ENCODE measurements at regions of chrX and their contacts with region 1.

Region 1: DNA sequence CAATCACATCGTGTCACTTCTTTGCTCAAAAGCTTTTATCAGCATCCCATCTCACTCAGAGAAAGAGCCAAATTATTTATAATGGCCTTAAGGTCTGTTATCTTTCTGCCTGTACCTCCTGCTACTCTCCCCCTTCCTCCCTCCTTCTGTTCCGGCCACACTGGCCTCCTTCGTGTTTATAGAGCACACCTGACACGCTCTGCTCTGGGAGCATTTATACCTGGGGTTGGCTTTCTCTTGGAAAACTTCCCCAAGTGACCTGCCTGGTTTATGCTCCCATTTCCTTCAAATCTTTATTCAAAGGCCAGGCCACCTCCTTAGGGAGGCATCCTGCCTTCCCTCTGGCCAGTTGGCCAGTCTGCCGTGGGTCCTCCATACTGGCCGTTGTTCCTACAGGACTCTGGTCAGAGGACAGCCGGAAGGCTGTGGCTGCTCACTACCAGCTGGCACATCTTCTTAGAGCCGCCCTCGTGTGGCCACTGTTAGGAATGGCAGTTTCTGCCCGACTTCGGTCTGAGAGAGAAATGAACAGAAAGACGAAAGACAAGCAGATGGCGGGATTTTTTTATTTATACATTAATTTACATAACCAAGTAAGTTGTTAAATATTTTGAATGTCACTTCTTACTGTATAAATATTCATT is 80.2 kb upstream of the CBLL2 start:
- DNase-seq: peak; percentile 73
- ATAC-seq: peak; percentile 36
- H3K4me3 Mint-ChIP-seq: no peak overlapping the region
- H3K27ac Mint-ChIP-seq: no peak overlapping the region
- H3K4me1 Mint-ChIP-seq: peaks cover 8% of the 10 kb centered on the region
- H3K27me3 Mint-ChIP-seq: no peaks in the 10 kb centered on the region

Region 2: DNA sequence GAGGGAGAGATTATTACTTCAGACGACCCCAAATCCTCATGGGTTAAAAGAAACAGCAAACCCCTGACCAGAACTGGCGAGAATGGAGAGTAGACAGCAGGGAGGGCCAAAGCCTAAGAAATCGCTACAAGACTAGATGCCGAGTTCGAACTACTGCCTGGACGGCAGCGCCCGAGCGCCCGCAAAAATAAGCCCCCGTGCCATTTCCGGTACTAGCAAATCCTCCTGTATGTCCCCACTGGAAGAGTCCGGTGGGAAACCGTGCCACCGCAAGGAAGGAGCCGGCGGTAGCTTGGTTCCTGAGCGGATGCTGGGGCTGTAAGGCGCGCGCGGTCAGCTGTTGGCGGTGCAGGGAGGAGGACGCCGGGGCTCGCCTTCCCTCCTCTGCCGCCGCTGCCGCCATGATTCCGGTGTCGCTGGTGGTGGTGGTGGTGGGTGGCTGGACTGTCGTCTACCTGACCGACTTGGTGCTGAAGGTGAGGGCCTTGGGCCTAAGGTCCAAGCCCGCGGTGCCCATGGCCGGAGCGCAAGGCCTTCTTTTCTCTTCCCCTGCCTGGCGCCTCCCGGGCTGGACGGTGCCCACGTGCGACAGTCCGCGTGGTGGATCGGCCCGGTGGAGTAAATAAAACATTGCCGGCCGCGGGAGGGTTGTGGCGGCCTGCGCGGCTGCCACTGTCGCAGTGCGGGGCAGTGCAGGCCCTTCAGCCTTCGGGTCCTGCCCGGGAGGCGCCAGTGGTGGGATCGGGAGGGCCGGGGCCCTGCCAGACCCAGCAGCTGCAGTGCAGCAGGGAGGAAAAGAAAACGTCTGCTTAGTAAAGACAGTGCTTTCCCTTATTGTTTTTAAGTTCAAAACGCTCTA is 353.0 kb before region 1 on chrX and contains the start of gene MBTPS2:
- CTCF ChIA-PET with region 1: no interaction called
- POLR2A ChIA-PET with region 1: no interaction called
- intact Hi-C with region 1: loop called (anchors 1 to 10 kb)
- DNase-seq: peak; percentile 90
- ATAC-seq: peak; percentile 87
- H3K4me3 Mint-ChIP-seq: peak within 1 kb of the TSS; percentile 84
- H3K27ac Mint-ChIP-seq: peak within 1 kb of the TSS; percentile 92
- H3K4me1 Mint-ChIP-seq: peaks cover 11% of the 10 kb centered on the region
- H3K27me3 Mint-ChIP-seq: no peaks in the 10 kb centered on the region
- total RNA-seq, gene MBTPS2: 6.9 to 7.8 TPM

Region 3: GRCh38 chrX:22081475-22082092 is 111.0 kb before region 1 on chrX:
- CTCF ChIA-PET with region 1: interaction called, 3 read pairs
- POLR2A ChIA-PET with region 1: no interaction called
- intact Hi-C with region 1: loop called in 1 of 2 experiments (anchors 5 kb)
- DNase-seq: peak; percentile 76
- ATAC-seq: no peak
- H3K4me3 Mint-ChIP-seq: no peak overlapping the region
- H3K27ac Mint-ChIP-seq: no peak overlapping the region
- H3K4me1 Mint-ChIP-seq: peaks cover 9% of the 10 kb centered on the region
- H3K27me3 Mint-ChIP-seq: no peaks in the 10 kb centered on the region

Region 4: GRCh38 chrX:22135994-22136684 is 56.4 kb before region 1 on chrX:
- CTCF ChIA-PET with region 1: interaction called, 5 read pairs
- POLR2A ChIA-PET with region 1: no interaction called
- intact Hi-C with region 1: loop called in 1 of 2 experiments (anchors 2 kb)
- DNase-seq: peak; percentile 12
- ATAC-seq: peak; percentile 49
- H3K4me3 Mint-ChIP-seq: no peak overlapping the region
- H3K27ac Mint-ChIP-seq: peak overlapping the region; percentile 47
- H3K4me1 Mint-ChIP-seq: peaks cover 15% of the 10 kb centered on the region
- H3K27me3 Mint-ChIP-seq: no peaks in the 10 kb centered on the region

Region 5: DNA sequence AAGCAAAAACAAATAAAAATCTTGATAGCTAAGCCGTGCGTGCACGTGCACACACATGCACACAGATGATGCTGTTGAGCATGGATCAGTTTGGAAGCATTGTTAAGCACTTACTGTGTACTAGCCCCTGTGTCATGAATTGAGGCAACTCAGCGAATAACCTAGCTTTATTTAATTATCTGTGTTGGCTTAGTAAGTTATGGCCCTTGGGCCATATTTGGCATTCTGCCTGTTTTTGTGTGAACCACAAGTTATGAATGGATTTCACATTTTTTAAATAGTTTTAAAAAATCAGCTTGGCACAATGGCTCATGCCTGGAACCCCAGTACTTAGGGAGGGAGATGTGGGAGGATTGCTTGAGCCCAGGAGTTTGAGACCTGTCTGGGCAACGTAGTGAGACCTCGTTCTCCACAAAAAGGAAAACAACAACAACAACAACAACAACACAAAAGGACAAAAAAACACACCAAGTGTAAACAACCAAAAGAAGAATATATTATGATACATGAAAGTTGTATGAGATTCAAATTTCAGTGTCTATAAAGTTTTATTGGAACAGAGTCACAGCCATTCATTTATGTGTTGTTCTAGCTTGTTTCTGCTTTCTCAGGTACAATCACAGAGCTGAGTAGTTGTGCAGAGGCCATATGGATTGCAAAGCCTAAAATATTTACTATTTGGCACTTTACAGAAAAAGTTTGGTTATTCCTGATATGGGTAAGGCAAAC is 33.3 kb before region 1 on chrX:
- CTCF ChIA-PET with region 1: no interaction called
- POLR2A ChIA-PET with region 1: no interaction called
- intact Hi-C with region 1: no loop called
- DNase-seq: no peak
- ATAC-seq: no peak
- H3K4me3 Mint-ChIP-seq: no peak overlapping the region
- H3K27ac Mint-ChIP-seq: no peak overlapping the region
- H3K4me1 Mint-ChIP-seq: no peaks in the 10 kb centered on the region
- H3K27me3 Mint-ChIP-seq: no peaks in the 10 kb centered on the region

Region 6: DNA sequence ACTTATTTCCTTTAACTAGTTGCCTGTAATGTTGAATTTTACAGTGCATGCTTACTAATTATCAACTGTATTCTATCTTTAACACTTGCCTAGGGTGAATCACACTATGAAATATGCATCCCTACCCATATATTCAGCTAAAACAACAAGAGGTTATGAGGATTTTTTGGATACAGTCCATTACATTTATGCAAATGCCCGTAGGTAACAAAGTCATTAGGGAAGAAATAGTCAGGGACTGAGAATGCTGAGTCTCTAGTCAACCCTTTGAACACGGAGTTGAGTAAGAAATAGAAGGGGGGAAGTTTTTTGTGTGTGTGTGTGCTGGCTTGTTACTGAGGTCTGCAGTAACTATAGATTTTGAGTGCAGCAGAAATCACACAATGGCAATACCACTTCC is 54.1 kb after region 1 on chrX:
- CTCF ChIA-PET with region 1: no interaction called
- POLR2A ChIA-PET with region 1: no interaction called
- intact Hi-C with region 1: no loop called
- DNase-seq: no peak
- ATAC-seq: no peak
- H3K4me3 Mint-ChIP-seq: no peak overlapping the region
- H3K27ac Mint-ChIP-seq: no peak overlapping the region
- H3K4me1 Mint-ChIP-seq: no peaks in the 10 kb centered on the region
- H3K27me3 Mint-ChIP-seq: no peaks in the 10 kb centered on the region